GM10248 (cell line): ENCODE measurements at regions of chr14 and their contacts with region 1.

Region 1: DNA sequence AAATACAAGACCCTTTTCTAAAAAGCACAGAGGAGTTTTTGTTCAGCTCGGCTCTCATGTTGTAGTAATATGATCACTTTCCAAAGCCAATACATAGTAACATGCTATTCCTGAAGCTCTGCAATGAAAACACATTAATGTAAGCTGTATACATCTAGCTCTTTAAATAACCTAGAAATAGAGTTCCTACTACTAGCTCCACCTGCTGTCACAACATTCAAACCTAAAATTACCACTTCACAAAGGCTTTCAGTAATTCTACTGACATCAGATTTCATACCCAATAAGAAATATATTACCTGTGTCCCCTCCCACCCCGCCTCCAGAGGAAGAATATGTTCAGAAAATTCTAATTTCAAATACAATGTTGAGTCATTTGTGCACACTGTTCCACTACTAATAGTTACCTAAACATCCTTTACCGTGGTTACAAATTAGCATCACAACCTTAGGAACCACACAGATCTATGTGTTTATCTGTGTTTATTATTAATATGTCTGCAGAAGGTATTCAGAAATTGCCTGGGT is 17.8 kb downstream of the EFCAB11 start:
- DNase-seq: no peak
- CTCF ChIP-seq: no peak

Region 2: DNA sequence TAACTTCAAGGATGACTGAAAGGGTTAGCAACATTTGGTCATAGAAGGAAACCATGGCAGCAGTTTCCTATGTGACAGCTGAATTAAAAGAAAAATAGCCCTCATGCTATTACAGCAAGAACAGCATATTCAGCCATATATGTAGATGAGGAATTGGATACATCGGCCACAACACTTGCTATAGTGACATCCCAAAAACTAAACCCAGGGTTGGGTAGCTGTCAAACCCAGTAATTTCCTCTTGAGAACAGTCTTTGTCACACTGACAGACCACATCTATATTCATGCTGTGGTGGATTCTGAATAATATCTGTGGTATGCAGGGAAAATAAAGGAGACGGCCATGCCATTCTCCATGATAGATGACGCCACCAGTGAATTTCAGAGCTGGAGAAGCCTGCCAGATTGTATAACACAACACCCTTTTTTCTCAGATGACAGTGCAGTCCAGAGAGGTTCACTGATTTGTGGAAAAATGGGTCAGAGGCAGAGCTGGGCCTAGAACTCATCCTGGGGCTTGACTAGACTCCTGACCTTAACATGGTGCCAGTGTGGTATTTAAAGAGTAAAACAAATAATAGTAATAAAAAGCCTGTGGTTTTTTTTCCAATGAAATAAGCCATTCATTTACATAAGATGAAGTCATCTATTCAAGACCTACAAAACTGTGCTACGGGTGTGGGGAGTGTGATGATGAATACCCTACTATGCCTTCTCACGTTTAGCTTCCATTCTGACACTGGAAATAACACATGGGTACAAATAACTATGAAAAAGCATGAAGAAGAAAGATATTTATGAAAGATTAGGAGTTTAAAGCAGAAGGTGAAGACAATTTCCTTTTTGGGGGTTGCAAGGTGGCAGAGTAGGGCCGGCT is 14.5 kb before region 1 on chr14:
- CTCF ChIA-PET with region 1: interaction called, 15 read pairs
- POLR2A ChIA-PET with region 1: no interaction called
- DNase-seq: no peak
- CTCF ChIP-seq: no peak

Region 3: DNA sequence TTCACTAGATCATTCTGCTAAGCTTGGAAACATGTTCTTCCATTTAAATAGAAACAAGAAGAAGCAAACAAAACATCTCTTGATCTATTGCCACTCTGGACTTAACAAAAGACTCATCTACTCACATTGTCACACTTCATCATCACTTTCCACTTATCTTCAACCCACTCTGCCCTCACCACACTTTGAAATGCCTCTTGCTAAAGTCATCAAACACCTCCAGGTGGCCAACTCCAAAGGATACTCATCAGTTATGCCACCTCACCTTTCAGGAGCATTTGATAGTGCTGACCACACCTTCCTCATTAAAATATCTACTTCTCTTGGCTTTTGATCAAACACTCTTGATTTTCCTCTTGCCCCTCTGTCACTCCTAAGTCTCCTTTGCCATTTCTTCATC is 10.6 kb after region 1 on chr14:
- CTCF ChIA-PET with region 1: interaction called, 55 read pairs
- POLR2A ChIA-PET with region 1: no interaction called
- DNase-seq: no peak
- CTCF ChIP-seq: no peak

Region 4: DNA sequence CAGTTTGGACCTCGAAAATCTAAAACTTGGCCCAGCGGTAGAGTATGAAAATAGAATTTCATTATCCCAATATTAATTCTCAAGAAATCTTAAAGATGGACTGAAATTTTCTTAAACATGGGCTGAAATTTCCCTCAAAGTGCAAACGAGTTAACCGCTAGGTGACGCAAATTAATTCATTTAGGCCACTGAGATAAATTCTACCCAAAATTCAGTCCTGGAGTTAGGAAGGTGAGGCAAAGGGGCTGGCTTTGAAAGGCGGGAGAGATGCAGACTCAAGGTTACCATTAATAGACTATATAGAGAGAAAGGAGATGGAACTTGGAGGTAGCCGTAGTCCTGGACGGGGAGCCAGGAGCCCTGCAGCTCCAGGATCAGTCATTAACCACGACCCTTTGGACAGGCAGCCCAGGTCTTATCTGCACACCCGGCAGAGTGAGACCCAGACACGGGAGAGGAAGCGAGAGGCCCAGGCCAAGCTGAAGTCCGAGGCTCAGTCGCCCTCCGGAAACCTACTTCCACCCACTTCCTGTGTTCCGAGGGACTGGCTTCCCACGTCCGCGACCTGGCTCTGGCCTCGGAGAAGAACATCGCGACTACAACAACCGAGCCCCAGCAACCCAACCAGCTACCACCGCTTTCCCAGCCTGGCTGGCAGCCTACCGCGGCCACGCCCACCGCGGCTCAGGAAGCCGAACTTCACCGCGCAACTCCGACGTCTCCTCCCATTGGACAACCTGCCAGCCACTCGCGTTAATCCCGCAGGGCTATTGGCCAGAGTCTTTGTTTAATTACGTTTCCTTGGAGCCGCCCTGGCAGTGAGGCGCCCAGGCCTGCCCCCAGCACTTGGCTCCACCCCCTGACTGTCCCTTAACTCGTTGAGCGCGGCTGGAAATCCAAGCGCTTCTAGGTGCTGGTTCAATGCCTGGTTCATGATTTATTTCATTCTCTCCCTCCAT is 17.6 kb after region 1 on chr14 and contains the start of gene EFCAB11:
- CTCF ChIA-PET with region 1: interaction called, 55 read pairs
- POLR2A ChIA-PET with region 1: no interaction called
- DNase-seq: peak; percentile 93
- CTCF ChIP-seq: peak; percentile 12

Region 5: GRCh38 chr14:89959853-89960445 is 23.2 kb after region 1 on chr14:
- CTCF ChIA-PET with region 1: interaction called, 55 read pairs
- POLR2A ChIA-PET with region 1: no interaction called
- DNase-seq: no peak
- CTCF ChIP-seq: no peak

Region 6: DNA sequence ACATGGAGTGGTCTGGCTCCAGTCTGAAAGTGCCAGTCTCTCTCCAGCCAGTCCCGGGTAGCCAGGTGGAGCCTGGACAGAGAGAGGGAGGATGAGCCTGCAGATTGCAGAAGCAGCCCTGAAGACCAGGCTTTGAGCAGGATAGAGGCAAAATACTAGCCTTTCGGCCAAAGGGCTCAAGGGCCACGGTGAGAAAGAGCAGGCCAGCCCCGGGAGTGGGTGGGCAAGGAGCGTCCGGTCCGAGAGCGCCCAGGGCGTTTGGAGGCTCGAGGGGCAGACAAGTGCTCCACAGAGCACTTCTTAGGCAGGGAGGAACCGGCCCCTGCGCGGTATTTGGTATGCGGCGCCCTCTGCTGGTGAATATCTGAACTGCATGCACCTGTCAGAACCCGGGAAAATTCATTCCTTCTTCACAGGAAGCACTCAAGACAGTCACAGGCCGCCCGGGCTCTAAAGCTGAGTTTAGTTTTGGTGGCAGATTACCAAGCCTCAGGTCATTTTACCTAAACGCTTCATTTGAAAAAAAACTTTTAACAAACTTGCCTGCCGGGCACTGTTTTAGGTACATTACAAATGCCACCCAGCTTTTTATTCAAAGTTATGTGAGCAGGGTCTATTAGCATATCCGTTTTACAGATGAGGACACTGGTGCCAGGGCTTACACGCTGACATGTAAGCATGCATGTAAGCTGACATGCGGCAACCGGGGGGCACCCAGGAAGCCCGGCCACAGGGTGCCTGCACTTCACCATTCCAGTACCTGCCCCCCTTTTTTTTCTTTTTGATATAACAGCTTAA is 298.7 kb after region 1 on chr14:
- CTCF ChIA-PET with region 1: interaction called, 36 read pairs
- POLR2A ChIA-PET with region 1: no interaction called
- DNase-seq: peak; percentile 81
- CTCF ChIP-seq: peak; percentile 84